ENCODE measurements at regions of chr3 and their contacts with region 1.

Region 1: DNA sequence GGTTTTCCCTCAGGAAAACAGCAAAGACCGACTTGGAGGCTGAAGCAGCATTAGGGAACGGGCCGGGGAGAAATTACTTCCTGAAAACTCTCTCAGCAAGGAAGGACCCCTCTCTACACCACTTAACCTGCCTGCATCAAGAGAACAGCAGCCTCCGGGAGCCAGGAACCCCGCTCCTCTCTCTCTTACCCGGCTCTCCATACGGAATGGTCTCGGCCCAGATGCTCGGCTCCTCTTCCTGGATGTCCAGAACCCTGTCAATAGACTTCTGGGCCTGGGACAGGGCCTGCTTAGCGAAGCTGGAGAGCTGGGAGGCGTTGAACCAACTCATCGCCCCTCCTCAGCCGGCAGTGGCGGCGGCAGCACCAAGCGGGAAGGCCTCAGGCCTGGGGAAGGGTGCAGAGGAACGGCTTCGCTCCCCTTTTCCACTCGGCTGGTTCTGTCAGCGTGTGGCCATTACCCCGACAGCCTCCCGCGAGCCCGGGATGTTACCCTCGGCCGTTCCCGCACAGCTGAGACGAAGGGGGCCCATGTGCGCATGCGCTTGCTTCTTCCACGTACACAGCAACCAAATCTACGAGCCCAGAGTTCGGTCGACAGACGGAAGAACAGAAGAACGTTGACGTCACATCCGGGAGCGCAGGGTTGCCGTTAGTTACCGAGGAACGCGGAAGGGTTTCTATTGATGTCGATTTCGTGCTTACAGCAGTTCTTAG is at the start of gene TMF1:
- DNase-seq: peak; percentile 99
- H3K4me3 ChIP-seq: peak within 1 kb of the TSS; percentile 63 to 64
- H3K27ac ChIP-seq: peak within 1 kb of the TSS; percentile 92
- H3K4me1 ChIP-seq: no peaks in the 10 kb centered on the region
- H3K27me3 ChIP-seq: no peaks in the 10 kb centered on the region
- CTCF ChIP-seq: peak in 1 of 4 experiments; percentile 12
- POLR2A ChIP-seq: peak; percentile 91
- total RNA-seq, gene TMF1: 24.9 to 29.1 TPM

Region 2: DNA sequence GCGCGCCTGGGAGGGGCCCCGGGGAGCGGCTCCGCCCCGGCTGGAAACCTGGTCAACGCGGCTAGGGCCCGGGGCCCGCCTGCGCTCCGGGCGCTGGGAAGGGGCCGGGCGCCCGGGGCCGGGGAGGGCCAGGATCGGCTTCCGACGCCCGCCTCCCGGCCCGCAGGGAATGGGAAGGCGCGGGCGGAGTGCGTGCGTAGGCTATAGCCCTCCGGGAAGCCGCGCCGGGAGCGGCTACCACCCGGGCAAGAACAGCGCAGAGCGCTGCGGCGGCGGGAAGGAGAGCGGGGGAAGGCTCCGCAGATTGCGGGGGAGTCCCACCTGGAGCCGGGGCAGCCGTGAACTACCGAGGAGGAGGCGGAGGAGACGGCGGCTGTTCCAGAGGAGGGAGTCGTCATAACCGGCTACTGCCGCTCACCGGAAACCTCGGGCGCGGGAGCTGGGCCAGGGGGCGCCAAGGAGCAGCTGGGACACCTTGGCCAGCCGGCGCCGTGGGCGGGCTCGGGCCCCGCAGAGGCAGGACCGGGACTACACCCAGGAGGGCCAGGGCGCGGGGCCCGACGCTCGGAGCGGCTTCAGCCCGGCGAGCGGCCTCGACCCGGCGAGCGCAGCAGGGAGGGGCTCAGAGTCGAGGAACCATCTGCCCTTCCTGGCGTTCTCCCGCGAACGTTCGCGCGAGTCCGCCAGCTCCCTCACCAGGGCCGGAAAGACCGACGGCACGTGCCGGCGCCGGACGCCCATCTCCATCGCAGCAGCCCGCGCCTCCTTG is 38.5 kb before region 1 on chr3 and contains the start of gene EOGT:
- intact Hi-C with region 1: loop called (anchors 5 kb)
- DNase-seq: peak; percentile 88
- H3K4me3 ChIP-seq: peak within 1 kb of the TSS; percentile 76 to 94
- H3K27ac ChIP-seq: peak within 1 kb of the TSS; percentile 97 to 100
- H3K4me1 ChIP-seq: peaks cover 9% of the 10 kb centered on the region
- H3K27me3 ChIP-seq: no peaks in the 10 kb centered on the region
- CTCF ChIP-seq: peak; percentile 51 to 74 (median 62)
- POLR2A ChIP-seq: peak; percentile 30
- total RNA-seq, gene EOGT: 40.4 to 42.8 TPM

Region 3: GRCh38 chr3:69212411-69213139 is 160.7 kb after region 1 on chr3:
- intact Hi-C with region 1: no loop called
- DNase-seq: no peak
- H3K4me3 ChIP-seq: no peak overlapping the region
- H3K27ac ChIP-seq: no peak overlapping the region
- H3K4me1 ChIP-seq: no peaks in the 10 kb centered on the region
- H3K27me3 ChIP-seq: no peaks in the 10 kb centered on the region
- CTCF ChIP-seq: no peak
- POLR2A ChIP-seq: no peak